Gastrocnemius medialis (tissue), 4 donors: ENCODE measurements at regions of chr10 and their contacts with region 1.

Region 1: DNA sequence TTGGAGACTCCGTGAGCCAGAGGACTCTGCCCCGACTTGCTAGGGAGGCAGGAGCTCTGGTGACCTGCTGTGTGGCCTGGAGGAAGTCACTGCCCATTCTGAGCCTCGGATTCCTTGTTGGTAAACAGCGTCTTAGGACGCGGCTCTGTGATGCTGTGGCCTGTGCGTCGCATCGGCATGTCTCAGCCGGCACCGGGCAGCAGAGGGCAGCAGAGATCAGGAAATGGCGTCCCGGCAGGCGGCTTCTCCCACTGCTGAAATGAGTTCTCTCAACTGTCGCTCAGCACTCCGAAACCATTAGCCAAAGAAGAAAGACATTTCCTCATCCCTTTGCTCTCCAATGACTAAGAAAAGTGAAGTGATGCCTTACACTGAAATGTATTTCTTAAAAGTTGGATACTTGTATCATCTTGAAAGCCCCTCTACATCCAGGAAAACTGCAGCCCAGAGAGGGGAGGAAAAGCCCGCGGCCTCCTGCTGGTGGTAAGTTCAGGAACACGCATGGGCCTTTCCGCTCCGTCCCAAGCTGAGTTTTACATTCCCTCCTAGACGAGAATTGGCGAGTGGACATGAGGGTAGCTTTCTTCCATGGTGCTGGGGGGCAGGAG is 91.7 kb downstream of the WDR11 start:
- DNase-seq: peak; percentile 14 to 32
- ATAC-seq: peak; percentile 72
- H3K4me3 ChIP-seq: no peak overlapping the region
- H3K27ac ChIP-seq: no peak overlapping the region
- H3K4me1 ChIP-seq: no peaks in the 10 kb centered on the region
- H3K27me3 ChIP-seq: peaks cover 0 to 7% (median 0%) of the 10 kb centered on the region in 3 donors
- CTCF ChIP-seq: peak; percentile 32 to 80 (median 78)
- POLR2A ChIP-seq: no peak

Region 2: GRCh38 chr10:120538091-120538490 is 404.8 kb before region 1 on chr10:
- in situ Hi-C with region 1: no loop called
- intact Hi-C with region 1: no loop called
- DNase-seq: no peak
- ATAC-seq: no peak
- H3K4me3 ChIP-seq: no peak overlapping the region
- H3K27ac ChIP-seq: no peak overlapping the region
- H3K4me1 ChIP-seq: no peaks in the 10 kb centered on the region
- H3K27me3 ChIP-seq: no peaks in the 10 kb centered on the region
- CTCF ChIP-seq: no peak
- POLR2A ChIP-seq: no peak

Region 3: GRCh38 chr10:120760253-120760652 is 182.7 kb before region 1 on chr10:
- in situ Hi-C with region 1: no loop called
- intact Hi-C with region 1: no loop called
- DNase-seq: no peak
- ATAC-seq: no peak
- H3K4me3 ChIP-seq: no peak overlapping the region
- H3K27ac ChIP-seq: no peak overlapping the region
- H3K4me1 ChIP-seq: no peaks in the 10 kb centered on the region
- H3K27me3 ChIP-seq: no peaks in the 10 kb centered on the region
- CTCF ChIP-seq: no peak
- POLR2A ChIP-seq: no peak

Region 4: DNA sequence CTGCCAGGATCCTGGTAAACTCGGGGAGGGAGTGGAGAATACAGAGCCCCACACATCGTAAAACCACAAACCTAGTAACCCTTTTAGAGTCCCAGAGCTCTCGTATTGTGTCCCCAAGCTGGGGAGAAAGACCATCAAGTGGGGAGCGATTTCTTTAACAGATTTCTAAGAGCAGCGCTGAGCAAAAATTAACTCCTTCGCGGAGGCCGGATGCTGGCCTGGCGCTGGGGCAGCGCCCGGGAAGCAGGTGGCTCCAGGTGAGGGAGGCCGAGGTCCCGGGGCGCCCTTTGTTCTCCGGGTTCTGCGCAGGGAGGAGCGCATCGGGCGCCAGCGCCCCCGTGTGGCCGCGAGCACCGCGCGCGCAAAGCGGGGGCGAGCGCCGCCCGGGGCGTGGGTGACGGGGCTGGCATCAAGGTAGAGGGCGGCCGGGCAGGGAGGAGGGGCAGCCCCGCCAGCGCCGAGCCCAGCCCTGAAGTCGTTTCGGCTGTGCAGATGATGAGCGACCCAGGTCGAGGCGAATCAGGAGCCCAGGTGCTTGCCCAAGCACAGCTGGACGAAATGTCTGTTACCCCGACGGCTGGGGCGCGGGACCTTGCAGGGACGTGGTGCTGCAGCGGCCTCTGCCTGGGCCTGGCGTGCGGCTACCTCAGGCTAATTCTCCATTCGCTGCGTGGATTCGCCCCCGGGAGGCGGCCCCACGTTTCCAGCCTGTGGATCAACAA is 665.7 kb after region 1 on chr10:
- in situ Hi-C with region 1: loop called in 3 of 4 experiments (anchors 5 to 25 kb)
- intact Hi-C with region 1: loop called (anchors 5 kb)
- DNase-seq: no peak
- ATAC-seq: no peak
- H3K4me3 ChIP-seq: peak overlapping the region in 2 of 4 donors; percentile 16 to 28
- H3K27ac ChIP-seq: no peak overlapping the region
- H3K4me1 ChIP-seq: no peaks in the 10 kb centered on the region
- H3K27me3 ChIP-seq: peaks cover 15 to 17% (median 16%) of the 10 kb centered on the region in 3 donors
- CTCF ChIP-seq: peak; percentile 36 to 68 (median 58)
- POLR2A ChIP-seq: no peak

Region 5: GRCh38 chr10:121734589-121735045 is 791.7 kb after region 1 on chr10:
- in situ Hi-C with region 1: loop called (anchors 5 to 25 kb)
- intact Hi-C with region 1: loop called (anchors 2 kb)
- DNase-seq: no peak
- ATAC-seq: no peak
- H3K4me3 ChIP-seq: no peak overlapping the region
- H3K27ac ChIP-seq: no peak overlapping the region
- H3K4me1 ChIP-seq: no peaks in the 10 kb centered on the region
- H3K27me3 ChIP-seq: no peaks in the 10 kb centered on the region
- CTCF ChIP-seq: peak in 4 of 5 experiments; percentile 22 to 68 (median 38)
- POLR2A ChIP-seq: no peak

Region 6: DNA sequence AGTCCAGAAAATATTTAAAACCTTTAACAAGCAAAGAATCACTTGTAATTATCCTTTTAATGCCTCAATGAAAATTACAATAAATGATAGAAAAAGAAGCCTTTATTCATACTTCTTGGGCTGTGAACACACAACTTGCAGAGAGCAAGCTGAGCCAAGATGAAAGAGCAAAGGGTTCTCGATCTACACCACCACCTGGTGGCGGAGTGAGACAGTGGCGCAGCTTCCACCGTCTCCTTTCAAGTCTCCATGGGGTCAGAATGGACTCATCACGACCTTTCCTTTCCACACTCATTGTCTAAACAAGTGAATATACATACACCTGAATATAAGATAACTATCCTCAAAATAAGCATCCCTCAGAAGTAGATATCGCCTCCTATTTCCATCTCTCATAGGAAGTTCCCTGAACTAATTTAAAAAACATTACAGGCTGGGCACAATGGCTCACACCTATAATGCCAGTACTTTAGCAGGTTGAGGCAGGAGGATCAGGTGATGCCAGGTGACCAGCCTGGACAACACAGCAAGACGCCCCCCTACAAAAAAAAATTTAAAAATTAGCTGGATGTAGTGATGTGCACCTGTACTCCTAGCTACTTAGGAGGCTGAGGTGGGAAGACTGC is 944.2 kb after region 1 on chr10:
- in situ Hi-C with region 1: loop called in 3 of 4 experiments (anchors 10 to 25 kb)
- intact Hi-C with region 1: loop called (anchors 5 kb)
- DNase-seq: peak in 1 of 2 donors; percentile 19
- ATAC-seq: peak in 1 of 2 donors; percentile 69
- H3K4me3 ChIP-seq: no peak overlapping the region
- H3K27ac ChIP-seq: no peak overlapping the region
- H3K4me1 ChIP-seq: no peaks in the 10 kb centered on the region
- H3K27me3 ChIP-seq: no peaks in the 10 kb centered on the region
- CTCF ChIP-seq: peak; percentile 27 to 59 (median 51)
- POLR2A ChIP-seq: no peak

Region 7: DNA sequence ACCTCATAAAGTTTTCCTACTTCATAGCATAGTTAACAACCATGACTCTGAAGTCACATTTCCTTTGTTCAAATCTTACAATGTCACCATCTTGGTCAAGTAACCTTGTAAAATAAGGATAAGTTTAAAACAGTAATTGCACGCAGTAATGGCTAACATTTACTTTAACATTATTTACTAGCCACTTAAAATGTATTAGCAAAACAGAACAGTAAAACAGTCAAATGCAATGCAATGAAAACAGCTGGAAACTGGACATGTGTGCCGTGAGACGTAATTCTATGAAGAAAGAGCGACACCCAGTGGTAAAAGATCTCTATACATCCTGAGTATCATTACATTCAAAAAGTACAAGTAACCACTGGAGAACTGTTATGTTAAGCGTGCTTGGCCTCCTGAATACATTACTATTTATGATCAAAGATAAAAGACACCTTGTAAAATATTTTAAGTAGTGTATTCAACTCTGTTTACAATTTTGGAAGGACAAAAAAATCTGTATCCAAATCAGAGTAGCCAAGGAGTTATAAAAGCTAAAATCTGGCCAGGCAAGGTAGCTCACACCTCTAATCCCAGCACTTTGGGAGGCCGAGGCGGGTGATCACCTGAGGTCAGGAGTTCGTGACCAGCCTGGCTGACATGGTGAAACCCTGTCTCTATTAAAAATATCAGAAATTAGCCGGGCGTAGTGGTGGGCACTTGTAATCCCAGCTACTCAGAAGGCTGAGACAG is 957.7 kb after region 1 on chr10:
- in situ Hi-C with region 1: loop called (anchors 10 to 25 kb)
- intact Hi-C with region 1: loop called (anchors 5 kb)
- DNase-seq: no peak
- ATAC-seq: peak in 1 of 2 donors; percentile 84
- H3K4me3 ChIP-seq: no peak overlapping the region
- H3K27ac ChIP-seq: no peak overlapping the region
- H3K4me1 ChIP-seq: peaks cover 0 to 3% of the 10 kb centered on the region in 2 donors
- H3K27me3 ChIP-seq: no peaks in the 10 kb centered on the region
- CTCF ChIP-seq: peak; percentile 28 to 71 (median 48)
- POLR2A ChIP-seq: no peak